ENCODE measurements at regions of chr17 and their contacts with region 1.

Region 1: GRCh38 chr17:67294451-67295199 is 49.6 kb upstream of the HELZ start:
- DNase-seq: no peak
- H3K4me3 ChIP-seq: no peak overlapping the region
- H3K27ac ChIP-seq: no peak overlapping the region
- H3K4me1 ChIP-seq: peaks cover 0 to 29% (median 19%) of the 10 kb centered on the region in 6 donors
- H3K27me3 ChIP-seq: no peaks in the 10 kb centered on the region
- CTCF ChIP-seq: no peak
- POLR2A ChIP-seq: no peak

Region 2: GRCh38 chr17:67194134-67194533 is 100.5 kb before region 1 on chr17:
- intact Hi-C with region 1: no loop called
- DNase-seq: no peak
- H3K4me3 ChIP-seq: no peak overlapping the region
- H3K27ac ChIP-seq: no peak overlapping the region
- H3K4me1 ChIP-seq: peaks cover 0 to 3% (median 0%) of the 10 kb centered on the region in 6 donors
- H3K27me3 ChIP-seq: no peaks in the 10 kb centered on the region
- CTCF ChIP-seq: no peak
- POLR2A ChIP-seq: no peak

Region 3: GRCh38 chr17:67221062-67221998 is 73.3 kb before region 1 on chr17:
- intact Hi-C with region 1: loop called (anchors 5 kb)
- DNase-seq: no peak
- H3K4me3 ChIP-seq: no peak overlapping the region
- H3K27ac ChIP-seq: no peak overlapping the region
- H3K4me1 ChIP-seq: peaks cover 0 to 77% (median 19%) of the 10 kb centered on the region in 6 donors
- H3K27me3 ChIP-seq: no peaks in the 10 kb centered on the region
- CTCF ChIP-seq: peak in 9 of 11 experiments; percentile 27 to 66 (median 45)
- POLR2A ChIP-seq: no peak

Region 4: DNA sequence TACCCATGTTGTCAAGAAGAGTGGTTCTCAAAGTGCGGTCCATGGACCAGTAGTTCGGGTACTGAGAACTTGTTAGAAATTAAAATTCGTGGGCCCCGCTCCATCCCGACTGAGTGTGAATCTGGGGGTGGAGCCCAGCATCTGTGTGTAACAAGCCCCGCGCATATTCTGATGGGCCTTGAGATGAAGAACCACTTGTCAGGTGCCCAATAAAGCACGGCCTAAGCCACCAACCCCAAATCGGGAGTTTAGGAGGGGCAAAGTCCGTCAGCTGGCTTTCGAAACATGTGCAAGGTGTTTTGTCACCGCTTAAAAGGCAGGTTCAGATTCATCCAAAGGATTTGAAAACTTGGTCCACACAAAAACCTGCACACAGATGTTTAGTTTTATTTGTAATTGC is 42.2 kb after region 1 on chr17:
- intact Hi-C with region 1: no loop called
- DNase-seq: no peak
- H3K4me3 ChIP-seq: no peak overlapping the region
- H3K27ac ChIP-seq: no peak overlapping the region
- H3K4me1 ChIP-seq: no peaks in the 10 kb centered on the region
- H3K27me3 ChIP-seq: no peaks in the 10 kb centered on the region
- CTCF ChIP-seq: no peak
- POLR2A ChIP-seq: no peak